Endothelial cell of umbilical vein (primary cell): ENCODE measurements at regions of chr1 and their contacts with region 1.

Region 1: GRCh38 chr1:205543411-205544301 is 39.2 kb downstream of the CDK18 start:
- DNase-seq: peak; percentile 95
- H3K4me3 ChIP-seq: peak overlapping the region in 2 of 3 experiments; percentile 32 to 39
- H3K27ac ChIP-seq: peak overlapping the region; percentile 98
- H3K4me1 ChIP-seq: peaks cover 9% of the 10 kb centered on the region
- H3K27me3 ChIP-seq: peaks cover 2 to 5% of the 10 kb centered on the region in 2 experiments
- CTCF ChIP-seq: peak in 1 of 2 donors; percentile 5
- POLR2A ChIP-seq: no peak

Region 2: GRCh38 chr1:205584732-205585131 is 41.1 kb after region 1 on chr1:
- CTCF ChIA-PET with region 1: interaction called, 19 read pairs
- POLR2A ChIA-PET with region 1: interaction called, 4 read pairs
- dilution Hi-C with region 1: no loop called
- intact Hi-C with region 1: loop called (anchors 1 kb)
- DNase-seq: no peak
- H3K4me3 ChIP-seq: no peak overlapping the region
- H3K27ac ChIP-seq: no peak overlapping the region
- H3K4me1 ChIP-seq: peaks cover 19% of the 10 kb centered on the region
- H3K27me3 ChIP-seq: no peaks in the 10 kb centered on the region
- CTCF ChIP-seq: peak; percentile 42 to 43
- POLR2A ChIP-seq: no peak

Region 3: GRCh38 chr1:205600085-205600484 is 56.4 kb after region 1 on chr1:
- CTCF ChIA-PET with region 1: interaction called, 7 read pairs
- POLR2A ChIA-PET with region 1: interaction called, 3 read pairs
- dilution Hi-C with region 1: no loop called
- intact Hi-C with region 1: loop called (anchors 1 kb)
- DNase-seq: peak; percentile 94
- H3K4me3 ChIP-seq: peak overlapping the region in 1 of 3 experiments; percentile 12
- H3K27ac ChIP-seq: peak overlapping the region; percentile 98
- H3K4me1 ChIP-seq: peaks cover 41% of the 10 kb centered on the region
- H3K27me3 ChIP-seq: no peaks in the 10 kb centered on the region
- CTCF ChIP-seq: peak; percentile 16 to 23
- POLR2A ChIP-seq: no peak

Region 4: DNA sequence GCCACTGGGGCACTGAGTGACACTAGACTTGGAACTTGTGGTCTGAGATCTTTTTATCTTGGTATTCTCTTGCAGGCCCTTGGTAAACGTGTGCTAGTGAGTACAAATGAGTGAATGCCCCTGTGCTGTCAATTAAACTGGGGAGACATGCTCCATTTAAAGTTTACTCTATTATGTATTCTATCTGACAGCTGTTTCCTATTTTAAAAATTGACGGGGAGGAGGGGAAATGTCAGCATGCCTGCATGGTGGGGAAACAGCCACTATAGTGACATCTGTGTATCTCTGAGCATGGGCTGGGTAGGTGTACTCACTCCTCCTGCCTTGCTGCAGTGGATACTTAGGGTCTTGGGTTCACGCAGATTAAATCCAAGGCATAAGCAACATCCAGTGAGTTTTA is 867.7 kb after region 1 on chr1:
- CTCF ChIA-PET with region 1: no interaction called
- POLR2A ChIA-PET with region 1: no interaction called
- dilution Hi-C with region 1: no loop called
- intact Hi-C with region 1: no loop called
- DNase-seq: no peak
- H3K4me3 ChIP-seq: no peak overlapping the region
- H3K27ac ChIP-seq: no peak overlapping the region
- H3K4me1 ChIP-seq: peaks cover 4% of the 10 kb centered on the region
- H3K27me3 ChIP-seq: no peaks in the 10 kb centered on the region
- CTCF ChIP-seq: no peak
- POLR2A ChIP-seq: no peak